ENCODE measurements at regions of chr2 and their contacts with region 1.

Region 1: GRCh38 chr2:152189622-152190495 is 14.3 kb upstream of the STAM2 start:
- DNase-seq: no peak
- ATAC-seq: peak; percentile 61
- H3K4me3 ChIP-seq: no peak overlapping the region
- H3K4me3 Mint-ChIP-seq: no peak overlapping the region
- H3K27ac ChIP-seq: no peak overlapping the region
- H3K27ac Mint-ChIP-seq: no peak overlapping the region
- H3K4me1 ChIP-seq: no peaks in the 10 kb centered on the region
- H3K4me1 Mint-ChIP-seq: peaks cover 0 to 9% (median 4%) of the 10 kb centered on the region in 7 donors
- H3K27me3 ChIP-seq: peaks cover 0 to 8% of the 10 kb centered on the region in 2 donors
- H3K27me3 Mint-ChIP-seq: peaks cover 5 to 37% (median 30%) of the 10 kb centered on the region in 5 donors

Region 2: GRCh38 chr2:151904807-151905206 is 285.1 kb before region 1 on chr2:
- CTCF ChIA-PET with region 1: no interaction called
- POLR2A ChIA-PET with region 1: no interaction called
- intact Hi-C with region 1: no loop called
- DNase-seq: no peak
- ATAC-seq: peak; percentile 60
- H3K4me3 ChIP-seq: no peak overlapping the region
- H3K4me3 Mint-ChIP-seq: no peak overlapping the region
- H3K27ac ChIP-seq: no peak overlapping the region
- H3K27ac Mint-ChIP-seq: no peak overlapping the region
- H3K4me1 ChIP-seq: no peaks in the 10 kb centered on the region
- H3K4me1 Mint-ChIP-seq: peaks cover 0 to 6% (median 0%) of the 10 kb centered on the region in 7 donors
- H3K27me3 ChIP-seq: no peaks in the 10 kb centered on the region
- H3K27me3 Mint-ChIP-seq: peaks cover 0 to 2% (median 0%) of the 10 kb centered on the region in 5 donors

Region 3: GRCh38 chr2:152062125-152063091 is 127.5 kb before region 1 on chr2:
- CTCF ChIA-PET with region 1: no interaction called
- POLR2A ChIA-PET with region 1: no interaction called
- intact Hi-C with region 1: no loop called
- DNase-seq: no peak
- ATAC-seq: peak; percentile 50
- H3K4me3 ChIP-seq: no peak overlapping the region
- H3K4me3 Mint-ChIP-seq: no peak overlapping the region
- H3K27ac ChIP-seq: no peak overlapping the region
- H3K27ac Mint-ChIP-seq: no peak overlapping the region
- H3K4me1 ChIP-seq: no peaks in the 10 kb centered on the region
- H3K4me1 Mint-ChIP-seq: peaks cover 0 to 2% (median 0%) of the 10 kb centered on the region in 7 donors
- H3K27me3 ChIP-seq: no peaks in the 10 kb centered on the region
- H3K27me3 Mint-ChIP-seq: peaks cover 8 to 27% (median 24%) of the 10 kb centered on the region in 5 donors

Region 4: DNA sequence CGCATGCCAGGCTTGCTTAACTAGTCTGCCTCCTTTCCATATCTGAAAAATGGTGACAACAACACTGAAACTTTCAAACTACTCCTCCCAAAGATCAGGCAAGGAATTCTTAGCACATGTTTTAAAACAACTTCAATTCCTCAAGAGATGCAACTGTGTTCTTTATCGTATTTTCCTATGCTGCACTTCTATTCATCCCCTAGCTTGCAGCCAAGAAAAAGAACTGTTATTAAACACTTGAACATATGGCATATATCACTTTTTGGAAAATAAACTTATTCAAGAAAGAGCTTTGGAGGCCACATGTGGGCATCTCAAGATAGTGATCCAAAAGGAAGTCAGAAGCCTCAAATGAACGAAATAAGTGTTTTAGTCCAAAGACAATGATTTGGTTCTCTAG is 61.4 kb after region 1 on chr2:
- CTCF ChIA-PET with region 1: no interaction called
- POLR2A ChIA-PET with region 1: no interaction called
- intact Hi-C with region 1: no loop called
- DNase-seq: no peak
- ATAC-seq: no peak
- H3K4me3 ChIP-seq: no peak overlapping the region
- H3K4me3 Mint-ChIP-seq: no peak overlapping the region
- H3K27ac ChIP-seq: no peak overlapping the region
- H3K27ac Mint-ChIP-seq: no peak overlapping the region
- H3K4me1 ChIP-seq: no peaks in the 10 kb centered on the region
- H3K4me1 Mint-ChIP-seq: no peaks in the 10 kb centered on the region
- H3K27me3 ChIP-seq: no peaks in the 10 kb centered on the region
- H3K27me3 Mint-ChIP-seq: peaks cover 9 to 37% (median 20%) of the 10 kb centered on the region in 5 donors

Region 5: DNA sequence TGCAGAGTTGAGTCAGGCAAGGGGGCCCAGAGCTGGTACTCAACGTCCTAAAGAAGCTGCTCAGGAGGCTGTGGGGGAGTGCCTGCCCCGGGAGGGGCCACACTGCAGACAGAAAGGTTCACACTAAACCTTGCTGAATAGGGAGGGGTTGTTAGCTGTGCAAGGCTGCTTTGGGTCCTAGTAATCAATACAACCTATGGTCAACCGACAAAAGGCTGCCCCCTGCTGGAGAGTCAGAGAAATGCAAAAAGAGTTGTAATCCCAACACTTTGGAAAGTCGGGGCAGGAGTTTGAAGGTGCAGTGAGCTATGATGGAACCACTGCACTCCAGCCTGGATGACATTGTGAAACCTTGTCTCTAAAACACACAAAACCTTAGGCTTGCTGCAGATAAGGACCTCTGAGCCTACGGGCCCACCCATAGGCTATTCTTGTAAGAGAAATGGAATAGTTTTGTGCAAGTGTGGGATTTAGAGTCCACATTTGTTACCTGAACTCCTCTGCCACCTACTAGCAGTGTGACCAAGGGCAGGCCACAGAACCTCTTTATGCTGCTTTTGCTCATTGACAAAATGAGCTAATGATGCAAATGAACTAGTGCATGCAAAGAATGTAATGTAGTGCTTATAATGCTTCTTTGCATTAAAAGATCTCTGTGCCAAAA is 445.9 kb after region 1 on chr2:
- CTCF ChIA-PET with region 1: no interaction called
- POLR2A ChIA-PET with region 1: no interaction called
- intact Hi-C with region 1: loop called in 1 of 2 experiments (anchors 1 kb)
- DNase-seq: peak; percentile 14 to 71 (median 49)
- ATAC-seq: peak; percentile 67
- H3K4me3 ChIP-seq: no peak overlapping the region
- H3K4me3 Mint-ChIP-seq: no peak overlapping the region
- H3K27ac ChIP-seq: no peak overlapping the region
- H3K27ac Mint-ChIP-seq: no peak overlapping the region
- H3K4me1 ChIP-seq: no peaks in the 10 kb centered on the region
- H3K4me1 Mint-ChIP-seq: no peaks in the 10 kb centered on the region
- H3K27me3 ChIP-seq: no peaks in the 10 kb centered on the region
- H3K27me3 Mint-ChIP-seq: peaks cover 0 to 4% (median 0%) of the 10 kb centered on the region in 5 donors